ENCODE measurements at regions of chr1 and their contacts with region 1.

Region 1: GRCh38 chr1:28259307-28260167 is at the start of gene SESN2:
- DNase-seq: peak; percentile 98
- H3K4me3 ChIP-seq: peak within 1 kb of the TSS; percentile 77 to 98 (median 80)
- H3K27ac ChIP-seq: peak within 1 kb of the TSS; percentile 34
- H3K4me1 ChIP-seq: peaks cover 12% of the 10 kb centered on the region
- H3K27me3 ChIP-seq: peaks cover 0 to 3% of the 10 kb centered on the region in 2 experiments
- CTCF ChIP-seq: no peak
- POLR2A ChIP-seq: peak; percentile 98
- total RNA-seq, gene SESN2: 13.1 and 13.2 TPM in 2 replicates

Region 2: GRCh38 chr1:28235755-28236655 is 23.5 kb before region 1 on chr1 and contains the start of gene ATP5IF1:
- CTCF ChIA-PET with region 1: interaction called, 3 read pairs
- POLR2A ChIA-PET with region 1: interaction called, 5 read pairs
- dilution Hi-C with region 1: no loop called
- intact Hi-C with region 1: loop called (anchors 2 kb)
- DNase-seq: peak; percentile 99
- H3K4me3 ChIP-seq: peak within 1 kb of the TSS; percentile 49 to 84 (median 64)
- H3K27ac ChIP-seq: peak within 1 kb of the TSS; percentile 1
- H3K4me1 ChIP-seq: peaks cover 17% of the 10 kb centered on the region
- H3K27me3 ChIP-seq: no peaks in the 10 kb centered on the region
- CTCF ChIP-seq: no peak
- POLR2A ChIP-seq: peak; percentile 97
- total RNA-seq, gene ATP5IF1: 133 and 144 TPM in 2 replicates

Region 3: DNA sequence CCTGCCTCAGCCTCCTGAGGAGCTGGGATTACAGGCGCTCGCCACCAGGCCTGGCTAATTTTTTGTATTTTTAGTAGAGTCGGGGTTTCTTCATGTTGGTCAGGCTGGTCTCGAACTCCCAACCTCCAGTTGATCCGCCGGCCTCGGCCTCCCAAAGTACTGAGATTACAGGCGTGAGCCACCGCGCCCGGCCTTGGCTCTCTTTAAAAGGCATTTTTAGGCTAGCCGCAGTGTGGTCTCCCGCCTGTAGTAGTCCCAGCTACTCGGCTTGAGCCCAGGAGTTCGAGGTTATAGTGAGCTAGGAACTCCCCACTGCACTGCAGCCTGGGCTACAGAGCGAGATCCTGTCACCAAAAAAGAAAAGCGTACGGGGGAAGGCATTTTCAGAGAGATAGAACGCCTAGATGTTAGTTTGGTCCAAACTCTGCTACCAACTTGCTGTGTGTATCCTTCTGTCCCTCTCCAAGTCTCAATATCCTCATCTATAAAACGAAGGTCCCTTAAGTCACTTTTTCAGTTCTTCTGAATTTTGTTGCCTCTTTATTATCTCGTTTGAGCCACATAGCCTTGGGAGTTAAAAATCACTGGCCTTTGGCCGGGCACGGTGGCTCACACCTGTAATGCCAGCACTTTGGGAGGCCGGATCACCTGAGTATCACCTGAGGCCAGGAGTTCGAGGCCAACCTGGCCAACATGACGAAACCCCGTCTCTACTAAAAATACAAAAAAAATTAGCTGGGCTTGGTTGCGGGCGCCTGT is 70.0 kb after region 1 on chr1:
- CTCF ChIA-PET with region 1: interaction called, 7 read pairs
- POLR2A ChIA-PET with region 1: interaction called, 11 read pairs
- dilution Hi-C with region 1: no loop called
- intact Hi-C with region 1: loop called (anchors 2 kb)
- DNase-seq: peak; percentile 25
- H3K4me3 ChIP-seq: peak overlapping the region; percentile 62 to 93 (median 78)
- H3K27ac ChIP-seq: peak overlapping the region; percentile 91
- H3K4me1 ChIP-seq: peaks cover 11% of the 10 kb centered on the region
- H3K27me3 ChIP-seq: no peaks in the 10 kb centered on the region
- CTCF ChIP-seq: no peak
- POLR2A ChIP-seq: no peak

Region 4: GRCh38 chr1:28510665-28511440 is 251.3 kb after region 1 on chr1:
- CTCF ChIA-PET with region 1: no interaction called
- POLR2A ChIA-PET with region 1: interaction called, 10 read pairs
- dilution Hi-C with region 1: no loop called
- intact Hi-C with region 1: no loop called
- DNase-seq: peak; percentile 52
- H3K4me3 ChIP-seq: peak overlapping the region in 1 of 3 experiments; percentile 100
- H3K27ac ChIP-seq: peak overlapping the region; percentile 29
- H3K4me1 ChIP-seq: peaks cover 34% of the 10 kb centered on the region
- H3K27me3 ChIP-seq: no peaks in the 10 kb centered on the region
- CTCF ChIP-seq: no peak
- POLR2A ChIP-seq: peak; percentile 98

Measured in endothelial cell of umbilical vein (primary cell).